Activated CD8-positive, alpha-beta T cell treated with anti-CD3 and anti-CD28 coated beads for 36 hours (primary cell): ENCODE measurements at regions of chr11 and their contacts with region 1.

Region 1: DNA sequence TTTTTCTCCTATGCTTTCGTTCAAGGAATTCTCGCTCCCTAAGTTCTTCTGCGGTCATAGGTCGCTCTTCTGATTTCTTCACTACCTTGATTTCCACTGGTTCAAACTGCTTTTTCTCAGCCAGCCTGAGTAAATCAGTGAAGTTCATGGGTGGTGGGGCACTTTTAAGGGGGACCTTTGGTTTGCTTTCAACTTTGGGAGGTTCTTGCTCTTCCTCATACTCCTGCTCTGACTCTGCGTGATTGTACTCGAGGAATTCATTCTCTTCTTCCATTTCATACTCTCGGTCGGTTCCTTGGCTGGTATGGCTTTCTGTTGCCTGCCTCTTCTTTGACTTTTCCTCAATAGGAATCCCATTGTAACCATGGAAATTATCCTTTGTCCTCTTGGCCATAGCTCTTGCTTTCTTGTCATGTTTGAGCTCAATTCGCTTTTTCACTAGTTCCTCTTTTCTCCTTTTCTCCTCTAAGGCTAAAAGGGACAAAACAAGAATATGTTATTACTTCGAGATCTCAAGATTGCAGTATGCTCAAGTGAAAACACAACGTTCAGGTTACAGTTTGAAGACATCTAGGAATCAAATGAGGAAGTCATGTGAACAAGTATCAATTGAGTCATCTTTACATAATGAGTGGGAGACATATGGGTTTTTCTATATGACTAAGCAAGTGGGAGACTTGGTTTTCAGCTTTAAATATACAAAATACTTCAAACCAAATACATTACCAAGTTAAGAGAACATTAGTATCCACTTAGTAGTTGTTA is 16.2 kb downstream of the MISFA start:
- DNase-seq: no peak
- ATAC-seq: peak; percentile 77
- H3K4me3 Mint-ChIP-seq: no peak overlapping the region
- H3K27ac Mint-ChIP-seq: peak overlapping the region; percentile 60
- H3K4me1 Mint-ChIP-seq: peaks cover 44% of the 10 kb centered on the region
- H3K27me3 Mint-ChIP-seq: no peaks in the 10 kb centered on the region
- CTCF ChIP-seq: no peak

Region 2: DNA sequence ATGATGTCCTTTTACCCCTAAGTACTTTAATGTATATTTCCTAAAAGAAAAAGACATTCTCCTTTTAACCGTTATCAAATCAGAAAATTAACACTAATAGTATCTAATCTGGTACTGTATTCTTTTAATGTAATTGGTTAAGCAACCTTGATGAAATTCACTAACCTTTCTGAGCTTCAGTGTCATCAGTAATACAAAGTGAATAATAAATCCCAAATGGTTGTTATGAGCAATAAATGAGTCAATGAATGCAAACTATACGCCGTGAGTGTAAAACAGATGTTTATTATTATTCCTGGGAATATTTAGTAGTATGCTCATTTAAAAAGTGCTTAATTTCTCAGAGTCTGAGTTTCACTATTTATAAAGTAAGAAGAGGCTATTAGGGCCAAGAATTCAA is 48.7 kb before region 1 on chr11:
- CTCF ChIA-PET with region 1: no interaction called
- POLR2A ChIA-PET with region 1: no interaction called
- intact Hi-C with region 1: no loop called
- DNase-seq: no peak
- ATAC-seq: no peak
- H3K4me3 Mint-ChIP-seq: no peak overlapping the region
- H3K27ac Mint-ChIP-seq: no peak overlapping the region
- H3K4me1 Mint-ChIP-seq: no peaks in the 10 kb centered on the region
- H3K27me3 Mint-ChIP-seq: no peaks in the 10 kb centered on the region
- CTCF ChIP-seq: no peak

Region 3: GRCh38 chr11:18588297-18589252 is 27.2 kb before region 1 on chr11 and contains the start of gene UEVLD:
- CTCF ChIA-PET with region 1: interaction called, 3 read pairs
- POLR2A ChIA-PET with region 1: interaction called, 6 read pairs
- intact Hi-C with region 1: loop called (anchors 2 kb)
- DNase-seq: peak; percentile 70
- ATAC-seq: peak; percentile 58
- H3K4me3 Mint-ChIP-seq: no peak within 1 kb of the TSS
- H3K27ac Mint-ChIP-seq: no peak within 1 kb of the TSS
- H3K4me1 Mint-ChIP-seq: peaks cover 10% of the 10 kb centered on the region
- H3K27me3 Mint-ChIP-seq: no peaks in the 10 kb centered on the region
- CTCF ChIP-seq: no peak
- total RNA-seq, gene UEVLD: 13.9 to 22.8 TPM

Region 4: GRCh38 chr11:18634140-18635032 is 18.6 kb after region 1 on chr11 and contains the start of gene SPTY2D1:
- CTCF ChIA-PET with region 1: interaction called, 11 read pairs
- POLR2A ChIA-PET with region 1: interaction called, 19 read pairs
- intact Hi-C with region 1: loop called (anchors 1 kb)
- DNase-seq: peak; percentile 100
- ATAC-seq: peak; percentile 98
- H3K4me3 Mint-ChIP-seq: peak within 1 kb of the TSS; percentile 89
- H3K27ac Mint-ChIP-seq: peak within 1 kb of the TSS; percentile 97
- H3K4me1 Mint-ChIP-seq: peaks cover 21% of the 10 kb centered on the region
- H3K27me3 Mint-ChIP-seq: no peaks in the 10 kb centered on the region
- CTCF ChIP-seq: no peak
- total RNA-seq, gene SPTY2D1: 21.3 TPM